Body of pancreas (tissue), 4 donors: ENCODE measurements at regions of chr5 and their contacts with region 1.

Region 1: DNA sequence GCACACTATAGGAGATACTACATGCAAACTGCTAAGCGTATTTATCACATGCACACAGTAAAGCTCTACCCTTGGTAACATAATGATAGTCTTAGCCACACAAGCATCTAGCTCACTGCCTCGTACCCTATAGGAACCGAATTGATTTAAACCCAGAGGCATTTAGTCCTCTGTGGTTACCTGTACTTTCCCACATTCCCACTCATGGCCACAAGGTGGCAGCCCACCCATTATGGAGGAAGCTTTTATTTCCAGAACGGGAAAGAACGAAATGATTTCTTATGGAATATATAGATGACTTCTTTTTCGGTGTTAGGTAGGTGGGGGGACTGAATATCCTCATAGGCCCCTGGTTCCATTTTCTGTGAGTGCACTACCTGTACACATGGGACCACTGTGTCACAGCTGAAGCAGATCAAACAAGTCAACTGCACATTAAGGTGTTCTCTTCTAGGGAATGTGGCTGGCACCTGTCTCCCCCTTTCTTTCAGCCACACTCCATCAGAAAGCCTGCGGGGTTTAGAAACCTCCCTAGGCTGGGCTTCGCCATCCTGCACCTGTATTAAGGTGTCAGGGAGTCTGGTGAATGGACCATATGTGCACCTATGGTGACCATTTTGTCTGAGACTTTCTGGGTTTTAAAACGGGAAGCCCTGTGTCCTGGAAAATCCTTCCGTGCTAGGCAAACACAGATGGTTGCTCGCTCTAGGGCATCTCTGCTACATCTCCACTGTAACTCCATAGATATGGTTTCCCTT is 313.2 kb downstream of the SLIT3 start:
- DNase-seq: peak; percentile 74 to 87 (median 76)
- ATAC-seq: peak; percentile 66
- H3K4me3 ChIP-seq: no peak overlapping the region
- H3K27ac ChIP-seq: no peak overlapping the region
- H3K4me1 ChIP-seq: no peaks in the 10 kb centered on the region
- H3K27me3 ChIP-seq: no peaks in the 10 kb centered on the region
- CTCF ChIP-seq: peak; percentile 77 to 90 (median 84)
- POLR2A ChIP-seq: no peak

Region 2: GRCh38 chr5:169201597-169201996 is 213.9 kb after region 1 on chr5:
- intact Hi-C with region 1: loop called (anchors 10 kb)
- DNase-seq: no peak
- ATAC-seq: no peak
- H3K4me3 ChIP-seq: no peak overlapping the region
- H3K27ac ChIP-seq: no peak overlapping the region
- H3K4me1 ChIP-seq: no peaks in the 10 kb centered on the region
- H3K27me3 ChIP-seq: no peaks in the 10 kb centered on the region
- CTCF ChIP-seq: no peak
- POLR2A ChIP-seq: no peak

Region 3: GRCh38 chr5:169296419-169297143 is 308.9 kb after region 1 on chr5:
- intact Hi-C with region 1: loop called (anchors 10 kb)
- DNase-seq: peak in 2 of 4 donors; percentile 12 to 36
- ATAC-seq: no peak
- H3K4me3 ChIP-seq: no peak overlapping the region
- H3K27ac ChIP-seq: no peak overlapping the region
- H3K4me1 ChIP-seq: peaks cover 9% of the 10 kb centered on the region
- H3K27me3 ChIP-seq: peaks cover 0 to 6% of the 10 kb centered on the region in 2 donors
- CTCF ChIP-seq: no peak
- POLR2A ChIP-seq: no peak

Region 4: DNA sequence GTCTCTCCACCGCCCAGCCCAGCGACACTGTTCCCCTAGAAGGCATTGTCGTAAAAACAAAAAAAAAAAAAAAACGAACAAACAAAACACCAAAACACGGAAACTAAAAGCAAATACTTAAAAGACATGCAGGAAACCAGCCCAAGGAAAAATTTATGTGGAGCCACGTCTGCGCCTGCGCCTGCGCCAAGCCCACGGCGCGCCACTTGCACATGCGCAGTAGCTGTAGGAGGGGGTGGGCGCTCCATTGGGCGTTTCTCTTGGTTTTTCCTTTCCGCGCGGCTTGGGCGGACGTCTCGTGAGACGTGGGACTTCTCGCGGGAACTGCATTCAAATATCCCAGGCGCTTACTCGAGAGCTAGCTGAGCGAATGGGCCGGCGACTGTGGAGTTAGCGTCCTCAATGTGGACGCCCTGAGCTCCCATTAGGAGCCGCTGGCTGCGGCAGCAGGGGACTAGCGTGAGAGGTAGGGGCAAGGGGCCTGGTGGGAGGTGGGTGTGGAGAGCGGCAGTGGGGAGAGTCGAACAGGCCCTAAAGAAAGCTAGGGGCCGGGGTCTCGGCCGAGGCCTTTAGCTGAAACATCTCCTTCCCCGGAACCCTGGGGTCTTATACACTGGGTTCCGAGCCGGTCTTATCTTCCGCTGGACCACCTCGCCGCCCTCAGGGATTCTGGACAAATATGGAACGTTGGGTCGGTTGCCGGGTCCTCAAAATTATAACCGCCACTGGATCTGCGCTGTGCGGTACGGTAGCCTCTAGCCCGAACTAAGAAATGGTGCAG is 595.9 kb after region 1 on chr5 and contains the start of gene SPDL1:
- intact Hi-C with region 1: loop called (anchors 10 kb)
- DNase-seq: peak; percentile 96 to 97 (median 96)
- ATAC-seq: peak; percentile 97
- H3K4me3 ChIP-seq: peak within 1 kb of the TSS; percentile 60 to 75
- H3K27ac ChIP-seq: peak within 1 kb of the TSS in 3 of 4 donors; percentile 57 to 75 (median 70)
- H3K4me1 ChIP-seq: peaks cover 5% of the 10 kb centered on the region
- H3K27me3 ChIP-seq: no peaks in the 10 kb centered on the region
- CTCF ChIP-seq: peak in 1 of 7 experiments; percentile 14
- POLR2A ChIP-seq: peak; percentile 14 to 68 (median 67)
- total RNA-seq, gene SPDL1: 3.6 to 12.9 TPM